Head of caudate nucleus (tissue), 42 donors: ENCODE measurements at regions of chr5 and their contacts with region 1.

Region 1: GRCh38 chr5:63125862-63126261 is 547.2 kb downstream of the LRRC70 start:
- DNase-seq: peak in 16 of 42 donors; percentile 3 to 67 (median 18)

Region 2: GRCh38 chr5:63963080-63963735 is 837.3 kb after region 1 on chr5:
- intact Hi-C with region 1: loop called (anchors 10 kb)
- DNase-seq: peak in 31 of 42 donors; percentile 16 to 81 (median 56)